Spleen (tissue), 13 donors: ENCODE measurements at regions of chr4 and their contacts with region 1.

Region 1: GRCh38 chr4:83012687-83013419 is 2.2 kb upstream of the LIN54 start:
- DNase-seq: peak; percentile 100
- H3K4me3 ChIP-seq: peak overlapping the region; percentile 55 to 97 (median 80)
- H3K27ac ChIP-seq: peak overlapping the region; percentile 31 to 96 (median 94)
- H3K4me1 ChIP-seq: peaks cover 16 to 58% (median 45%) of the 10 kb centered on the region in 6 donors
- H3K27me3 ChIP-seq: no peaks in the 10 kb centered on the region
- CTCF ChIP-seq: peak; percentile 54 to 93 (median 76)
- POLR2A ChIP-seq: peak in 1 of 3 donors; percentile 33

Region 2: DNA sequence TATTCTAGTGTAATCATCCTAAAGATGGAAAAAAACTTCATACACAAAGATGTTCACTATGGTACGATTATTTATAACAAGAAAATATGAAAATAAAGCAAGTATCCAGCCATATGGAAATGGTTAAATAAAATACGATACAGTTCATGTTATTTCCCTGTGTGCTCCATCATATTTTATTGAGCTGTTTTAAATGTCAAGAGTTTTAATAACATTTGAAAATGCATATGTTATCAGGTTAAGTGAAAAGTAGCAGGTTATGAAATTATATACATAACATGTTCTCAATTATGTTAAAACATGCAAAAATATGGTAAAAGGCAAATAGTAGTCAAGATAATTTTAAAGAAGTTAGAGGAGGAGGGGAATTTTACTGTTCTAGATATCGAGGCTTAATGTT is 831.1 kb before region 1 on chr4:
- intact Hi-C with region 1: no loop called
- DNase-seq: no peak
- H3K4me3 ChIP-seq: no peak overlapping the region
- H3K27ac ChIP-seq: no peak overlapping the region
- H3K4me1 ChIP-seq: no peaks in the 10 kb centered on the region
- H3K27me3 ChIP-seq: no peaks in the 10 kb centered on the region
- CTCF ChIP-seq: no peak
- POLR2A ChIP-seq: no peak

Region 3: GRCh38 chr4:82900331-82901128 is 112.3 kb before region 1 on chr4 and contains the start of gene THAP9:
- intact Hi-C with region 1: loop called (anchors 10 kb)
- DNase-seq: peak; percentile 99
- H3K4me3 ChIP-seq: peak within 1 kb of the TSS; percentile 58 to 83 (median 62)
- H3K27ac ChIP-seq: peak within 1 kb of the TSS; percentile 98 to 100 (median 99)
- H3K4me1 ChIP-seq: peaks cover 29 to 68% (median 43%) of the 10 kb centered on the region in 6 donors
- H3K27me3 ChIP-seq: no peaks in the 10 kb centered on the region
- CTCF ChIP-seq: peak in 2 of 11 experiments; percentile 12 to 17
- POLR2A ChIP-seq: peak in 2 of 3 donors; percentile 9 to 85
- total RNA-seq, gene THAP9: 2.8 to 8.1 (median 3.6) TPM

Region 4: DNA sequence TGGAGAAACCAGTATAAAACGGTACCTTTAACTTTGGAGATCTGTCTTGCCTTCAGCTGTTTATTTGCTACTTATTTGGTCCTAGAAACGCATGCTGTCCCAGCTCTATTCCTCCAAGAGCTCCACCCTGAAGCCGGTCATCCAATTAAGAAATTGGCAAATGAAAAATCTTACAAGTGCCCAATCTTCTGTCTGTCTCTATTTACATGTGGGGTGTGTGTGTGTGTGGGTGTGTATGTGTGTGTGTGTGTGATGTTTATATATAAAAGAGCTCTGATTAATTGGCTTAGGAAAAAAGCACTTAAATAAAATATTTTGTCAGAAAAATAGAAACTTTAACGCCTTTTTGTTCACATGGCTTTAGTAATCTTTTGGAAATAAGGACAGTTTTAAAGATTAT is 84.2 kb after region 1 on chr4:
- intact Hi-C with region 1: no loop called
- DNase-seq: no peak
- H3K4me3 ChIP-seq: no peak overlapping the region
- H3K27ac ChIP-seq: no peak overlapping the region
- H3K4me1 ChIP-seq: peaks cover 0 to 67% (median 8%) of the 10 kb centered on the region in 6 donors
- H3K27me3 ChIP-seq: no peaks in the 10 kb centered on the region
- CTCF ChIP-seq: no peak
- POLR2A ChIP-seq: no peak